ENCODE measurements at regions of chr13 and their contacts with region 1.

Region 1: DNA sequence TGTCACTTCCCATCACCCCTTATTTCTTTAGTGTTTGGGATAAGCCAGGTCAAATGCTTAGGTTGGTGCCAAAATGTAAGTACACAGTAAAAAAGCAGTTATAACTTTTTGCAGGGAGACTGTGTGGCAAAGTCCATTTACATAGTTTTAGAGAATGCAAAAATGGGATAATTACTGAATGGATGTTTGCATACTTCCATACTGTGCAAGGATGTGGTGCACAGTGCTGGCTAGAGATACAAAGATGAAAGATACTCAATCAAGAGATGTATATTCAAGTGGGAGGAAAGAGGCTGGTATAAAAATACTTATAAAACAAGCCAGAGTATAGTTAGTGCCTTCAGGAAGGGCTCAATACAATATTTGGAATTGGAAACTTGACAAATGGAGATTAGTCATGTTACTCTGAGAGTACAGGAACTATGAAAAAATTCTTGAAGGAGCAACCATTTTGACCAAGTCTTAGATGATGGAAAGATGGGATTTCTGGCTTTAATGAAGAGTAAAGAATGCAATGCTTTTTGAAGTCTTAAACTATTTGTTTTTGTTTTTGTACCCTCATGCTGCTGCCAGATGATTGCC is 8.0 kb downstream of the PDS5B start:
- DNase-seq: no peak
- ATAC-seq: no peak
- H3K4me3 ChIP-seq: no peak overlapping the region
- H3K27ac ChIP-seq: no peak overlapping the region
- H3K4me1 ChIP-seq: peaks cover 16 to 25% of the 10 kb centered on the region in 2 donors
- H3K27me3 ChIP-seq: no peaks in the 10 kb centered on the region
- CTCF ChIP-seq: no peak
- POLR2A ChIP-seq: no peak

Region 2: DNA sequence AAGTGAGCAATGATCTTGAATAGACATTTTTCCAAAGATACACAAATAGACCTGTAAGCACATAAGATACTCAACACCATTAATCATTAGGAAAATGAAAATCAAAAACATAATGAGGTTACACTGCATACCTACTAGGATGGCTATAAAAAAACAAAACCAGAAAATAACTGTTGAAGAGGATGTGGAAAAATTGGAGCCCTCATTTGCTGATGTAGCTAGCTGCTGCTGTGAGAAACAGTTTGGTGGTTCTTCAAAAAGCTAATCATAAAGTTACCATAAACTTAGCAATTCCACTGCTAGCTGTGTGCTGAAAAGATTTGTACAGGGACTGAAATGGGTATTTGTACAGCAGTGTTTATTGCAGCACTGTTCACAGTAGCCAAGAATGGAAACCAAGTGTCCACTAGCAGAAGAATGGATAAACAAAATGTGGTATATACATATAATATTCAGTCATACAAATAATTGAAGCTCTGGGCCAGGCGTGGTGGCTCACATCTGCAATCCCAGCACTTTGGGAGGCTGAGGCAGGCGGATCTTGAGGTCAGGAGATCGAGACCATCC is 38.2 kb after region 1 on chr13:
- in situ Hi-C with region 1: loop called (anchors 5 to 10 kb)
- intact Hi-C with region 1: no loop called
- DNase-seq: no peak
- ATAC-seq: no peak
- H3K4me3 ChIP-seq: no peak overlapping the region
- H3K27ac ChIP-seq: no peak overlapping the region
- H3K4me1 ChIP-seq: peaks cover 12 to 19% of the 10 kb centered on the region in 2 donors
- H3K27me3 ChIP-seq: no peaks in the 10 kb centered on the region
- CTCF ChIP-seq: no peak
- POLR2A ChIP-seq: no peak

Region 3: GRCh38 chr13:32731576-32731975 is 137.3 kb after region 1 on chr13:
- in situ Hi-C with region 1: no loop called
- intact Hi-C with region 1: no loop called
- DNase-seq: no peak
- ATAC-seq: peak in 1 of 2 donors; percentile 85
- H3K4me3 ChIP-seq: no peak overlapping the region
- H3K27ac ChIP-seq: peak overlapping the region; percentile 38 to 59 (median 46)
- H3K4me1 ChIP-seq: peaks cover 34 to 38% of the 10 kb centered on the region in 2 donors
- H3K27me3 ChIP-seq: no peaks in the 10 kb centered on the region
- CTCF ChIP-seq: no peak
- POLR2A ChIP-seq: no peak